Aorta (tissue), 5 donors: ENCODE measurements at regions of chr7 and their contacts with region 1.

Region 1: DNA sequence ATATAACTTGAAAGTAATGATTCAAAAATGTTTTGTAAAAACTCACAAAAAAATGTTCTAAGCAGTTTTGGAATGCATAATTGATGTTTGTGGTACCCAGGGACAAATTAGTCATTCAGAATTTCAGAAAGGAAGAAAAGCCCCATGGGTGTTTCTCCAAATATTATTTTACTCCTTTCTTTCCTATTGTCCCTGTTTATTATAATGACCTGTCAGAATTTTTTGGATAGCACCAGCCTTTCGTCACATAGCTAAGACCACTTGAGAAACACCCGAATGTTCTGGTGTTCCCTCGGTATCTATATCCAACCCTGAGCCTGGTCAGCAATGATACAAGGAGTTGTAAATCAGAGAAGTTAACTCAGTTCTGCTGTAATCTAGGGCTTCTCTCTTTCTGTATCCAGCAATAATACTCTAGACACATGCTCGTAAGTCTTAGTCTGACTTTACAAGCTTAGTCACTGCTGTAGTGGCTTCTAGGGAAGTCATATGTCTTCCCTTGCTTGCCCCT is 64.8 kb upstream of the MEOX2 start:
- DNase-seq: no peak
- ATAC-seq: peak; percentile 70
- H3K4me3 ChIP-seq: no peak overlapping the region
- H3K27ac ChIP-seq: peak overlapping the region in 1 of 2 donors; percentile 67
- H3K4me1 ChIP-seq: peaks cover 5% of the 10 kb centered on the region in 2 donors
- H3K27me3 ChIP-seq: no peaks in the 10 kb centered on the region

Region 2: GRCh38 chr7:15652776-15653290 is 98.4 kb before region 1 on chr7:
- intact Hi-C with region 1: no loop called
- DNase-seq: no peak
- ATAC-seq: no peak
- H3K4me3 ChIP-seq: no peak overlapping the region
- H3K27ac ChIP-seq: no peak overlapping the region
- H3K4me1 ChIP-seq: no peaks in the 10 kb centered on the region
- H3K27me3 ChIP-seq: no peaks in the 10 kb centered on the region

Region 3: DNA sequence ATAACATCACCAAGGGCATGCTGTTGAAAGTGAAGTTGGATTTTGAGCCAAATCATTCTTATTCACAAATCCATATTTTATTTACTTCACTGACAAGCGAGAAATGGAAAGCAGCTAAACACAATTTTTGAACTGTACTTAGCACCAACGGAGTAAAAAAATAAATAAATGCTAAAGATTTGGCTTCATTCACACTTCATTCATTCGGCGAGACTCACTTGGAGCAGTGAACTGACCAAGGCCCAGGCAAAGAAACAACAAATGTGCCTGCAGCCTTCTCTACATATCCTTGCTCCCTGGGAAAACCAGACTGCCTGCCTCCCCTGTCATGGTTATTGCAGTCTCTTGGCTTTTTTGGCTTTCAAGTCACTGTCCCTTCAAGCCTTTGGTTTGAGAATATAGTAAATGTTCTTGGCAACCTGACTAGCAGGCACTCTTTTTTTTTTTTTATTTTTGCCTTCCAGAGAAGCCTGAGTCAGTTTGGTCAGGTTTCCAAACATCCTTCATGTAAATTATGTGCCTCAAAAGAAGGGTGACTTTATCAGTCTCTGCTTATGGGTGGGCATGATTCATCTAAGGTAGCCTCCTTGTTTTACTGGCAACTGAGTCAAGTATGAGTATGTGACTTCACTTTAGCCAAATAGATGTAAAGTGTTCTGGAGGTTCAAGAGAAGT is 112.8 kb after region 1 on chr7:
- intact Hi-C with region 1: loop called in 1 of 2 experiments (anchors 5 kb)
- DNase-seq: no peak
- ATAC-seq: peak; percentile 48
- H3K4me3 ChIP-seq: no peak overlapping the region
- H3K27ac ChIP-seq: peak overlapping the region in 1 of 2 donors; percentile 49
- H3K4me1 ChIP-seq: peaks cover 2 to 4% of the 10 kb centered on the region in 2 donors
- H3K27me3 ChIP-seq: no peaks in the 10 kb centered on the region

Region 4: DNA sequence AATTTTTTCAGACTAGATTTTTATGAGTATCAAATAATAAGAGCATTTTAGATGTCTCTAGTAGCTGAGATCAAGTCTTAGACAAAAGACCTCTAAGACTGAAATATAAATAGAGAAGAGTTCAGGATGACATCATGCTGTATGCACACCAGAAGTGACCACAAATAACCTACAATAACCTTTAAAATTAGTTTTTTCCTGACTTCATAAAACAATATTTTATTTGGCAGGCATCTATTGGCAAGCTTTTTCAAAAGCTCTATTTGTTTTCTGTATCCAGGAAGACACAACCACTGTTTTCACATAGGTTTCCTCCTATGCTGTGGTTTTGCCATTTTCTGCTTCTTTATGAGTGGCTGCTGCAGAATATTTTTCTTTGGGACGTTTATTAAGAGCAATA is 311.0 kb after region 1 on chr7:
- intact Hi-C with region 1: loop called in 1 of 2 experiments (anchors 10 kb)
- DNase-seq: no peak
- ATAC-seq: peak; percentile 69
- H3K4me3 ChIP-seq: no peak overlapping the region
- H3K27ac ChIP-seq: no peak overlapping the region
- H3K4me1 ChIP-seq: peaks cover 0 to 2% of the 10 kb centered on the region in 2 donors
- H3K27me3 ChIP-seq: no peaks in the 10 kb centered on the region